ENCODE measurements at regions of chr6 and their contacts with region 1.

Region 1: GRCh38 chr6:31366693-31367470 is 9.9 kb upstream of the HLA-B start:
- DNase-seq: peak; percentile 89
- H3K4me3 Mint-ChIP-seq: peak overlapping the region; percentile 75
- H3K27ac Mint-ChIP-seq: peak overlapping the region; percentile 25
- H3K4me1 Mint-ChIP-seq: peaks cover 23% of the 10 kb centered on the region
- H3K27me3 Mint-ChIP-seq: peaks cover 10% of the 10 kb centered on the region

Region 2: GRCh38 chr6:31139599-31139998 is 227.3 kb before region 1 on chr6:
- CTCF ChIA-PET with region 1: interaction called, 23 read pairs
- POLR2A ChIA-PET with region 1: no interaction called
- intact Hi-C with region 1: loop called (anchors 1 kb)
- DNase-seq: no peak
- H3K4me3 Mint-ChIP-seq: no peak overlapping the region
- H3K27ac Mint-ChIP-seq: no peak overlapping the region
- H3K4me1 Mint-ChIP-seq: peaks cover 3% of the 10 kb centered on the region
- H3K27me3 Mint-ChIP-seq: no peaks in the 10 kb centered on the region

Region 3: GRCh38 chr6:31197559-31198305 is 169.2 kb before region 1 on chr6:
- CTCF ChIA-PET with region 1: interaction called, 161 read pairs
- POLR2A ChIA-PET with region 1: interaction called, 31 read pairs
- intact Hi-C with region 1: loop called (anchors 1 kb)
- DNase-seq: peak; percentile 97
- H3K4me3 Mint-ChIP-seq: peak overlapping the region; percentile 89
- H3K27ac Mint-ChIP-seq: peak overlapping the region; percentile 83
- H3K4me1 Mint-ChIP-seq: peaks cover 53% of the 10 kb centered on the region
- H3K27me3 Mint-ChIP-seq: no peaks in the 10 kb centered on the region

Region 4: DNA sequence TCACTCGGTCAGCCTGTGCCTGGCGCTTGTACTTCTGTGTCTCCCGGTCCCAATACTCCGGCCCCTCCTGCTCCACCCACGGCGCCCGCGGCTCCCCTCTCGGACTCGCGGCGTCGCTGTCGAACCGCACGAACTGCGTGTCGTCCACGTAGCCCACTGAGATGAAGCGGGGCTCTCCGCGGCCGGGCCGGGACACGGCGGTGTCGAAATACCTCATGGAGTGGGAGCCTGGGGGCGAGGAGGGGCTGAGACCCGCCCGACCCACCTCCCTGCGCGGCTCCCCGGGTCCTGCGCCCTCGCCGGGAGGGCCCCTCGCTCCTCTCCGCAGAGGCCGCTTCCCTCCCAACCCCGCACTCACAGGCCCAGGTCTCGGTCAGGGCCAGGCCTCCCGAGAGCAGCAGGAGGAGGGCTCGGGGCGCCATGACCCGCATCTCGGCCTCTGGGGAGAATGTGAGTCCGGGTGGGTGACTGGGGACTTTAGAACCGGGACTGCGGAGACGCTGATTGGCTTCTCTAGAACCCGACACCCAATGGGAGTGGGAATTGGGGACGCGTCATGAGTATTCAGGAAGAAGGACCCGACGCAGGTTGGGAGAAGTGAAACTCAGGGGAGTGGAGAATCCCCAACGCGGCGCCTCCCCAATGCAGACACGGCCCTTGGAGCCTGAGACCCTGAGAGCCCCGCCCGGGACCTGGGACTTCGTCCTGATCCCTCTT is 95.1 kb before region 1 on chr6 and contains the start of gene HLA-C:
- CTCF ChIA-PET with region 1: interaction called, 11 read pairs
- POLR2A ChIA-PET with region 1: interaction called, 4 read pairs
- intact Hi-C with region 1: no loop called
- DNase-seq: peak; percentile 95
- H3K4me3 Mint-ChIP-seq: peak within 1 kb of the TSS; percentile 95
- H3K27ac Mint-ChIP-seq: peak within 1 kb of the TSS; percentile 99
- H3K4me1 Mint-ChIP-seq: peaks cover 51% of the 10 kb centered on the region
- H3K27me3 Mint-ChIP-seq: no peaks in the 10 kb centered on the region
- total RNA-seq, gene HLA-C: 976 to 983 TPM

Region 5: DNA sequence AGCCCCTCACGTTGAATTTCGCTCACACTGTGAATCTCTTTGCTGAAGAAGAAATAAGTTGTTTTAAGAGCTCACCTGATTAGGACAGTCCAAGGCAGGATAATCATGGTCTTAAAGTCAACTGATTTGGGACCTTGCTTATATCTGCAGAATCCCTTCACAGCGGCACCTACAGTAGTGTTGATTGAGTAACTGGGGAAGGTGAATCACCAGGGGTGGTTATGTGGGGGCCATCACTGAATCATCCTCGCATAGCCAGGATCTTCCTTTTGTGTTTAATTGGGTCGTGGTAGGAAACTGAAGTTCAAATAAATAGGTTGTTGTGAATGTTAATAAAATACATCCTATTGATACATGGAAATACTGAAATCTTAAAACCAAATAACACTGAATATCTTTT is 16.3 kb after region 1 on chr6:
- CTCF ChIA-PET with region 1: interaction called, 22 read pairs
- POLR2A ChIA-PET with region 1: no interaction called
- intact Hi-C with region 1: no loop called
- DNase-seq: peak; percentile 25
- H3K4me3 Mint-ChIP-seq: no peak overlapping the region
- H3K27ac Mint-ChIP-seq: no peak overlapping the region
- H3K4me1 Mint-ChIP-seq: no peaks in the 10 kb centered on the region
- H3K27me3 Mint-ChIP-seq: peaks cover 11% of the 10 kb centered on the region

Region 6: DNA sequence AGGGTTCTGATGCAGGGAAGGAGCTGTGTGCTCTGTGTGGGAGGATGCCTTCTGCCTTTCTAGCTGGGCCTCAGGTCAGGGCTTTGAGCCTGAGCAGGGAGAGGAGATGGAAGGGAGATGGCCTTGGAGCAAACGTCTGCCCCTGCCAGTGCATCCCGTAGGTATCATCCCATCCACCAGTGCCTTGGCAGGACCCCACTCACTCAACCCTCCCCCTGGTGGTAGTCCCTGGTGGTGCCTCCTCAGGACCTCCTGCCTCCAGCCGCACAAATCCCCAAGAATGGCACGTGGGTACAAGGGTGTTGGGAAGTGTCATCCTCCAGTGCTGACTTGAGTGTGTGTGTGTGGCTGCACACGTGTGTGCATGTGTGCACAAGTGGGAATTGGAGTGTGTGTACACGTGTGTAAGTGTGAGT is 108.0 kb after region 1 on chr6:
- CTCF ChIA-PET with region 1: no interaction called
- POLR2A ChIA-PET with region 1: no interaction called
- intact Hi-C with region 1: no loop called
- DNase-seq: no peak
- H3K4me3 Mint-ChIP-seq: no peak overlapping the region
- H3K27ac Mint-ChIP-seq: no peak overlapping the region
- H3K4me1 Mint-ChIP-seq: peaks cover 61% of the 10 kb centered on the region
- H3K27me3 Mint-ChIP-seq: no peaks in the 10 kb centered on the region